Transverse colon (tissue), 4 donors: ENCODE measurements at regions of chr11 and their contacts with region 1.

Region 1: DNA sequence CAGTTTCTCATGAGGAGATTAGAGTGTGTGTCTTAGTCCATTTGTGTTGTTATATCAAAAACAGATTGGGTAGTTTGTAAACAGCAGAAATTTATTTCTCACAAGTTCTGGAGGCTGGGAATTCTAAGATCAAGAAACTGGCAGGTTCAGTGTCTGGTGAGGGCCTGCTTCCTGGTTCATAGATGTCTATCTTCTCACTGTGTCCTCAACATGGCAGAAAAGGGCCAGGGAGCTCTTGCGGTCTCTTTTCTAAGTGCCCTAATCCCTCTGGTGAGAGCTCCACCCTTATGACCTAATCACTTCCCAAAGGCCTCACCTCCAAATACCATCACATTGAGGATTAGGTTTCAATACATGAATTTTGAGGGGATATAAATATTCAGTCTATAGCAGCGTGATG is 25.5 kb upstream of the AMOTL1 start:
- DNase-seq: no peak
- H3K4me3 ChIP-seq: no peak overlapping the region
- H3K27ac ChIP-seq: no peak overlapping the region
- H3K4me1 ChIP-seq: peaks cover 0 to 6% (median 2%) of the 10 kb centered on the region in 4 donors
- H3K27me3 ChIP-seq: peaks cover 73% of the 10 kb centered on the region
- CTCF ChIP-seq: no peak
- EP300 ChIP-seq: no peak
- POLR2A ChIP-seq: no peak

Region 2: GRCh38 chr11:94650756-94651155 is 91.9 kb before region 1 on chr11:
- in situ Hi-C with region 1: no loop called
- intact Hi-C with region 1: no loop called
- DNase-seq: peak; percentile 17
- H3K4me3 ChIP-seq: no peak overlapping the region
- H3K27ac ChIP-seq: peak overlapping the region in 1 of 4 donors; percentile 45
- H3K4me1 ChIP-seq: peaks cover 0 to 3% (median 0%) of the 10 kb centered on the region in 4 donors
- H3K27me3 ChIP-seq: no peaks in the 10 kb centered on the region
- CTCF ChIP-seq: no peak
- EP300 ChIP-seq: no peak
- POLR2A ChIP-seq: no peak

Region 3: GRCh38 chr11:94708642-94709041 is 34.0 kb before region 1 on chr11:
- in situ Hi-C with region 1: no loop called
- intact Hi-C with region 1: loop called (anchors 1 kb)
- DNase-seq: no peak
- H3K4me3 ChIP-seq: no peak overlapping the region
- H3K27ac ChIP-seq: no peak overlapping the region
- H3K4me1 ChIP-seq: peaks cover 0 to 12% (median 5%) of the 10 kb centered on the region in 4 donors
- H3K27me3 ChIP-seq: peaks cover 72% of the 10 kb centered on the region
- CTCF ChIP-seq: no peak
- EP300 ChIP-seq: no peak
- POLR2A ChIP-seq: no peak